CD8-positive, alpha-beta T cell (primary cell): ENCODE measurements at regions of chr14 and their contacts with region 1.

Region 1: DNA sequence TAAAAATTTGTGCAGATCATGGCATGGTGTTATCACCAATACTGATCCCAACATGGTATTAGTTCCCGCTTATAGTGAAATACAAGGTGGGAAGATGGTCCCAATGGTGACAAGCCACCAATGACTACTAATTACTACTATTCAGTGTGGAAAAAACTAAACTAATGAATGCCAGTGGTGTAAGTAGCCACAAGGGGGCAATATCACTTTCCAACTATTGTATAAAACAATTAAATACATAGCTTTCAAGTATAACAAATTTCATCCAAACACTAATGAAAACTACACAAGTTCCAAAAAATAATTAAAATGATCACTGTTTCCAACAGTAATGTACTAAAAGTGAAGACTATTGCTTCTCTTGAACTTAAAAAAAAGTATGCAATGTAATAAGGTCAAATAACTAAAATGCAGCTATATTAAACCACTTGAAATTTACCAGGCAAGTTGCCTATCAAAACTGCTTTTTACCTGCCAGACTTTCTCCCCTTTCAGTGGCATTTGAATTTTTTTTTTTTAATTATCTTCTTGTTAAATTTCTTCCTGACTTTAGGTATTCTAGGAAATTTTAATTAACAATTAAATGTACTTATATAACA is 58.0 kb downstream of the PAPLN start:
- DNase-seq: peak in 3 of 9 experiments; percentile 7 to 59 (median 47)
- ATAC-seq: peak; percentile 38
- H3K4me3 ChIP-seq: no peak overlapping the region
- H3K4me3 Mint-ChIP-seq: no peak overlapping the region
- H3K27ac ChIP-seq: no peak overlapping the region
- H3K27ac Mint-ChIP-seq: no peak overlapping the region
- H3K4me1 ChIP-seq: no peaks in the 10 kb centered on the region
- H3K4me1 Mint-ChIP-seq: peaks cover 2% of the 10 kb centered on the region
- H3K27me3 ChIP-seq: no peaks in the 10 kb centered on the region
- H3K27me3 Mint-ChIP-seq: no peaks in the 10 kb centered on the region
- CTCF ChIP-seq: peak; percentile 72

Region 2: DNA sequence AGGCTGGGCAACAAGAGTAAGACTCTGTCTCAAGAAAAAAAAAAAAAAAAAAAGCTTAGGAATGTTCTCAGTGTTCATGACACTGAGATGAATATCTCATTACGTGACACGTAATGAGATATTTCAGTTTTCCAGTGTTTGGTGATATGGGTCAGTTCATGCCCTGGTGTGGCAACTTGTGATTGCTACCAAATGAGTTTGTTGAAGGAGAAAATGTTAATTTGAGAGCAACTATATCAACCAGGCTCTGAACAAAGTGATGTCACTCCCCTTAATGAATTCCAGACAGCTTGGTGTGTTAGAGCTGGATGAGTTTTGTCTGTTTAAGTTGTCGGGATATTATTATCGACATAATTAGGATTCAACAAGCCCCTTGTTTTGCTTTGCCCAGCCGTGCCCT is 613.1 kb before region 1 on chr14:
- CTCF ChIA-PET with region 1: no interaction called
- POLR2A ChIA-PET with region 1: no interaction called
- intact Hi-C with region 1: no loop called
- DNase-seq: no peak
- ATAC-seq: no peak
- H3K4me3 ChIP-seq: no peak overlapping the region
- H3K4me3 Mint-ChIP-seq: no peak overlapping the region
- H3K27ac ChIP-seq: no peak overlapping the region
- H3K27ac Mint-ChIP-seq: no peak overlapping the region
- H3K4me1 ChIP-seq: no peaks in the 10 kb centered on the region
- H3K4me1 Mint-ChIP-seq: no peaks in the 10 kb centered on the region
- H3K27me3 ChIP-seq: no peaks in the 10 kb centered on the region
- H3K27me3 Mint-ChIP-seq: no peaks in the 10 kb centered on the region
- CTCF ChIP-seq: no peak

Region 3: GRCh38 chr14:72781476-72782181 is 513.7 kb before region 1 on chr14:
- CTCF ChIA-PET with region 1: no interaction called
- POLR2A ChIA-PET with region 1: no interaction called
- intact Hi-C with region 1: no loop called
- DNase-seq: no peak
- ATAC-seq: no peak
- H3K4me3 ChIP-seq: no peak overlapping the region
- H3K4me3 Mint-ChIP-seq: no peak overlapping the region
- H3K27ac ChIP-seq: no peak overlapping the region
- H3K27ac Mint-ChIP-seq: no peak overlapping the region
- H3K4me1 ChIP-seq: no peaks in the 10 kb centered on the region
- H3K4me1 Mint-ChIP-seq: peaks cover 7% of the 10 kb centered on the region
- H3K27me3 ChIP-seq: no peaks in the 10 kb centered on the region
- H3K27me3 Mint-ChIP-seq: peaks cover 2% of the 10 kb centered on the region
- CTCF ChIP-seq: no peak

Region 4: DNA sequence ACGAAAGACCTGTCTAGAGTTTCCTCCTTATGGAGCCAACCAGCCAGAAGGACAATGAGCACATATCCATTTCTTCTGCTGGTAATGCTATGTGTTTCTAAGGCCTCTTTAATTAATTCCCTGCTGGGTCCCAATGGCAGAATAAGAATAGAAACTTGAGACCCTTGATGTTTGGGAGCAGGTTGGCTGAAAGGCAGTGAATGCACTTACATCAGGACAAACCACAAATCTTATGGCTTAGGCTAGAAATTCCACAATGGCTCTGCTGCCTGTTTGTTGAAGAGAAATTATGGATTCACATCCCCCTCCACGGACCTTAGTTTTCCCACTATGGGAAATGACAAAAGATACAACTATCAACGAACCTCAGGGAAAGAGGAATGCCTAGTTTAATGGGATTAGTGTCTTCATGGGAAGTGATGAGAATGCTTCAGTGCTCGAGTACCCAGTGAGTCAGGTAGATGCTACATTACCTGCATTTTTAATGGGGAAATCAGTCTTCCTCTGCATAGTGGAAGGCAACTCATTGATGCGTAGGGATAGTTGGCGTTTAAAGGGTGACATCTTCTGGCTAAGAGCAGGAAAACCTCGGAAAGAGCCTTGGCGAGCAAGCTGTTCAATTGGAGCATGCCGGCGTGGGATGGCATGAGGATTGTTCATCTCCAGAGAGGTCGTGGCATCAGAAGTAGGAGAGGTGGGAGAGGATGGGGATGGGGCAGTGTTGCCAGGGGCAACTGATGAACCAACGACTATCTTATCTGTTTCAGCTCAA is 11.5 kb before region 1 on chr14:
- CTCF ChIA-PET with region 1: interaction called, 10 read pairs
- POLR2A ChIA-PET with region 1: interaction called, 3 read pairs
- intact Hi-C with region 1: no loop called
- DNase-seq: no peak
- ATAC-seq: no peak
- H3K4me3 ChIP-seq: no peak overlapping the region
- H3K4me3 Mint-ChIP-seq: no peak overlapping the region
- H3K27ac ChIP-seq: no peak overlapping the region
- H3K27ac Mint-ChIP-seq: no peak overlapping the region
- H3K4me1 ChIP-seq: no peaks in the 10 kb centered on the region
- H3K4me1 Mint-ChIP-seq: peaks cover 7% of the 10 kb centered on the region
- H3K27me3 ChIP-seq: no peaks in the 10 kb centered on the region
- H3K27me3 Mint-ChIP-seq: no peaks in the 10 kb centered on the region
- CTCF ChIP-seq: no peak

Region 5: GRCh38 chr14:73472185-73473114 is 177.2 kb after region 1 on chr14:
- CTCF ChIA-PET with region 1: interaction called, 123 read pairs
- POLR2A ChIA-PET with region 1: interaction called, 6 read pairs
- intact Hi-C with region 1: loop called in 1 of 2 experiments (anchors 1 kb)
- DNase-seq: peak in 2 of 9 experiments; percentile 67 to 74
- ATAC-seq: peak; percentile 86
- H3K4me3 ChIP-seq: no peak overlapping the region
- H3K4me3 Mint-ChIP-seq: no peak overlapping the region
- H3K27ac ChIP-seq: no peak overlapping the region
- H3K27ac Mint-ChIP-seq: no peak overlapping the region
- H3K4me1 ChIP-seq: no peaks in the 10 kb centered on the region
- H3K4me1 Mint-ChIP-seq: peaks cover 7% of the 10 kb centered on the region
- H3K27me3 ChIP-seq: no peaks in the 10 kb centered on the region
- H3K27me3 Mint-ChIP-seq: peaks cover 2% of the 10 kb centered on the region
- CTCF ChIP-seq: peak; percentile 71

Region 6: DNA sequence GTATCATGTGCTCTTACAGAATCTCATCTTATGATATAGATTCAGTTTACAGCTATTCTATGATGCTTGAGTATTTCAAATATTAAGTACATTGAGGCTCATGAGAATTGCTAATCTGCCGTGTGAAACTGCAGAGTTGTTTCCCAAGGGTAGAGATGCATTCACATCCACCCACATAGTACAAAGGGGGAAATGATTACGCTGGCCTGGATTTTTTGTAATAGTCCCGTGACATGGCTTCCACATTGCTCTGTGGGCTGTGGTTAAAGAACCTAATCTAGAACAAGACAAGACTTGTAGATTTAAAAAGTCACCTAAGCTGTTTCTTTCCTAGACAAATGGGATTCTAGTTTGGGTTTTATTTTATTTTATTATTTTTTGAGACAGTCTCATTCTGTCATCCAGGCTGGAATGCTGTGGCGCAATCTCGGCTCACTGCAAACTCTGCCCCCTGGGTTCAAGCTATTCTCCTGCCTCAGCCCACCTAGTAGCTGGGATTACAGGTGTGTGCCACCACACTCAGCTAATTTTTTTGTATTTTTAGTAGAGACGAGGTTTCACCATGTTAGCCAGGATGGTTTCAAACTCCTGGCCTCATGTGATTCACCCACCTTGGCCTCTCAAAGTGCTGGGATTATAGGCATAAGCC is 182.4 kb after region 1 on chr14:
- CTCF ChIA-PET with region 1: interaction called, 123 read pairs
- POLR2A ChIA-PET with region 1: no interaction called
- intact Hi-C with region 1: loop called in 1 of 2 experiments (anchors 1 kb)
- DNase-seq: peak in 1 of 9 experiments; percentile 24
- ATAC-seq: no peak
- H3K4me3 ChIP-seq: no peak overlapping the region
- H3K4me3 Mint-ChIP-seq: no peak overlapping the region
- H3K27ac ChIP-seq: no peak overlapping the region
- H3K27ac Mint-ChIP-seq: no peak overlapping the region
- H3K4me1 ChIP-seq: no peaks in the 10 kb centered on the region
- H3K4me1 Mint-ChIP-seq: no peaks in the 10 kb centered on the region
- H3K27me3 ChIP-seq: no peaks in the 10 kb centered on the region
- H3K27me3 Mint-ChIP-seq: no peaks in the 10 kb centered on the region
- CTCF ChIP-seq: no peak

Region 7: GRCh38 chr14:73633116-73634010 is 338.1 kb after region 1 on chr14:
- CTCF ChIA-PET with region 1: interaction called, 3 read pairs
- POLR2A ChIA-PET with region 1: no interaction called
- intact Hi-C with region 1: loop called in 1 of 2 experiments (anchors 2 kb)
- DNase-seq: peak; percentile 21 to 78 (median 60)
- ATAC-seq: peak; percentile 87
- H3K4me3 ChIP-seq: peak overlapping the region; percentile 56 to 59
- H3K4me3 Mint-ChIP-seq: peak overlapping the region; percentile 83
- H3K27ac ChIP-seq: no peak overlapping the region
- H3K27ac Mint-ChIP-seq: no peak overlapping the region
- H3K4me1 ChIP-seq: peaks cover 8% of the 10 kb centered on the region
- H3K4me1 Mint-ChIP-seq: peaks cover 6% of the 10 kb centered on the region
- H3K27me3 ChIP-seq: no peaks in the 10 kb centered on the region
- H3K27me3 Mint-ChIP-seq: peaks cover 8% of the 10 kb centered on the region
- CTCF ChIP-seq: peak; percentile 72

Region 8: GRCh38 chr14:73862480-73862879 is 567.2 kb after region 1 on chr14:
- CTCF ChIA-PET with region 1: no interaction called
- POLR2A ChIA-PET with region 1: no interaction called
- intact Hi-C with region 1: loop called in 1 of 2 experiments (anchors 10 kb)
- DNase-seq: no peak
- ATAC-seq: no peak
- H3K4me3 ChIP-seq: no peak overlapping the region
- H3K4me3 Mint-ChIP-seq: no peak overlapping the region
- H3K27ac ChIP-seq: no peak overlapping the region
- H3K27ac Mint-ChIP-seq: no peak overlapping the region
- H3K4me1 ChIP-seq: no peaks in the 10 kb centered on the region
- H3K4me1 Mint-ChIP-seq: no peaks in the 10 kb centered on the region
- H3K27me3 ChIP-seq: no peaks in the 10 kb centered on the region
- H3K27me3 Mint-ChIP-seq: no peaks in the 10 kb centered on the region
- CTCF ChIP-seq: no peak